ENCODE measurements at regions of chr11 and their contacts with region 1.

Region 1: GRCh38 chr11:125404776-125405435 is 91.2 kb downstream of the FEZ1 start:
- DNase-seq: peak in 1 of 2 donors; percentile 80
- H3K4me3 ChIP-seq: peak overlapping the region in 1 of 2 donors; percentile 34
- H3K27ac ChIP-seq: no peak overlapping the region
- H3K4me1 ChIP-seq: peaks cover 0 to 8% of the 10 kb centered on the region in 2 donors
- H3K27me3 ChIP-seq: no peaks in the 10 kb centered on the region
- CTCF ChIP-seq: peak; percentile 94 to 99 (median 98)

Region 2: GRCh38 chr11:124961972-124962609 is 442.8 kb before region 1 on chr11:
- intact Hi-C with region 1: loop called (anchors 5 kb)
- DNase-seq: no peak
- H3K4me3 ChIP-seq: no peak overlapping the region
- H3K27ac ChIP-seq: no peak overlapping the region
- H3K4me1 ChIP-seq: no peaks in the 10 kb centered on the region
- H3K27me3 ChIP-seq: no peaks in the 10 kb centered on the region
- CTCF ChIP-seq: peak; percentile 42 to 68 (median 48)

Region 3: DNA sequence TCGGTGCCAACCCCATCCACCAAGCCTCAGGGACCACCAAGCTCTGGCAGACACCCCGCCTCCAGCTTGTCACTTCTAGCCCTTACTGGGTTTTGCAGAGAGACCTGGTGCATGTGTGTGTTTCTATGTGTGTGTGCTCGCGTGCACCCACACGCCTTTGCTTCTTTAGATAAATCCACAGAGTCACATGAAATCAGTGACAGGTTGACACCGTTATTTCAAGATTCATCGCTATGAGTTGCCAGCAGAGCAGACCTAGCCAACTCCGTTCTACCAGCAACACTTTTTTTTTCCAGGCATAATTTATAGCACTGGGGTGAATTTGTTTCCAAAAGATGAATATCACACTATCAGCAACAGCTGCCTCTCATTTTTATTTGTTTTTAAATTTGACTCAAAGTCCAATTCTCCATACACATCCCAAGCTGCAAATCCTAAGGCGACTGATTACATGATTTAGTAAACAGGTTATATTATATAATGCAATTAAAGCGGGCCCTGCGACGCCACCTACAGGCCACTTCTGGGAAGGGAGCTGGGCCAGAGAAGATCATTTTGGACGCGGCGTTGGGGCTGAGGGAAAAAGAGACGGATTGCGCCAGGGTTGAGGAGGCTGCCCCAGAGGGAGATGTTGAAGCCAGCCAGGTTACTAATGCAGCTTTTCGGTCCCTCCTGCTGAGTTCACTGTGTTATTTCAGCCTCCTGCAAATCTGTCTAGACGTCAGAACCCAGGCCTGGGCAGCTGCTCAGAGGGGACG is 59.3 kb before region 1 on chr11:
- intact Hi-C with region 1: loop called (anchors 1 kb)
- DNase-seq: peak; percentile 46 to 90
- H3K4me3 ChIP-seq: peak overlapping the region in 1 of 2 donors; percentile 16
- H3K27ac ChIP-seq: peak overlapping the region; percentile 61 to 83
- H3K4me1 ChIP-seq: peaks cover 0 to 11% of the 10 kb centered on the region in 2 donors
- H3K27me3 ChIP-seq: no peaks in the 10 kb centered on the region
- CTCF ChIP-seq: peak; percentile 85 to 92 (median 88)

Region 4: DNA sequence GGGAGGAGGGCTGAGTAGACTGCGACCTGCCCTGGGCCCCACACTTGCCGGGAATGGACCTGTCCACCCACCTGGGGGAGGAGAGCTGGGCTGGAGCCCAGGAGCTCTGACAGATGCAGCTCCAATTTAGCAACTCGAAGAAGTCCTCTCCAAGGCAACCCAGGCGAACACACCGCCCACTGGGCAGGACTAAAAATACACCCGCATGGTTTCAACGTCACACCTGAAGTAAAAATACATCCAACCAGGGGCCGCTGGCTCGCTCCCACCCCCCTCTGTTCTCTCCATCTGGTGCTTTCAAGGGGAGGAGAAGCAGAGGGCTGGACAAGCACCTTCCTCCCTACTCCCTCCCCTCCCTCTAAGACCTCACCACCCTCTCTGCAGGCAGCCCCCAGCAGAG is 28.8 kb before region 1 on chr11:
- intact Hi-C with region 1: loop called (anchors 1 kb)
- DNase-seq: peak; percentile 84 to 93
- H3K4me3 ChIP-seq: peak overlapping the region in 1 of 2 donors; percentile 30
- H3K27ac ChIP-seq: peak overlapping the region; percentile 62 to 68
- H3K4me1 ChIP-seq: peaks cover 4 to 32% of the 10 kb centered on the region in 2 donors
- H3K27me3 ChIP-seq: no peaks in the 10 kb centered on the region
- CTCF ChIP-seq: no peak

Measured in ascending aorta (tissue), 2 donors.